MCF 10A (cell line): ENCODE measurements at regions of chr4 and their contacts with region 1.

Region 1: GRCh38 chr4:83582289-83582769 is 46.4 kb downstream of the GPAT3 start:
- DNase-seq: peak; percentile 97
- H3K4me3 Mint-ChIP-seq: no peak overlapping the region
- H3K27ac Mint-ChIP-seq: no peak overlapping the region
- H3K4me1 Mint-ChIP-seq: peaks cover 12% of the 10 kb centered on the region
- H3K27me3 Mint-ChIP-seq: peaks cover 41% of the 10 kb centered on the region
- CTCF ChIP-seq: no peak

Region 2: DNA sequence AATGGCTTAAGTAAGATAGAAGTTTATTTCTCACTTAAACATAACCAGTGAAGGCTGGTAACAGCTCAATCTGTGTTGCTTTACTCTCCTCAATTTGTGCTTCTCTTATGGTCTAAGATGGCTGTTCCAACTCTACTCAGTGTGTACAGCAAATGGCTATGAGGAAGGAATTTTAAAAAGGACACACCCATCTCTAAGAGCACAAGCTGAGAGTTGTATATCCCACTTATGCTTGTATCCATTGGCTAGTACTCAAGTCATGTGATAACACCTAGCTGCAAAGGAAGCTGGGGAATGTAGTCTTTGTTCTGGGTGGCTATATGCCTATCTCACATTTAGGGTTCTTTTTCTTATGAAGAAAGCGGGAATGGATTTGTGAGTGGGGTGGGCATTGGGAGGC is 16.9 kb after region 1 on chr4:
- CTCF ChIA-PET with region 1: interaction called, 13 read pairs
- POLR2A ChIA-PET with region 1: no interaction called
- intact Hi-C with region 1: no loop called
- DNase-seq: peak; percentile 46
- H3K4me3 Mint-ChIP-seq: no peak overlapping the region
- H3K27ac Mint-ChIP-seq: no peak overlapping the region
- H3K4me1 Mint-ChIP-seq: no peaks in the 10 kb centered on the region
- H3K27me3 Mint-ChIP-seq: no peaks in the 10 kb centered on the region
- CTCF ChIP-seq: no peak